Caco-2 (cell line): ENCODE measurements at regions of chr6 and their contacts with region 1.

Region 1: DNA sequence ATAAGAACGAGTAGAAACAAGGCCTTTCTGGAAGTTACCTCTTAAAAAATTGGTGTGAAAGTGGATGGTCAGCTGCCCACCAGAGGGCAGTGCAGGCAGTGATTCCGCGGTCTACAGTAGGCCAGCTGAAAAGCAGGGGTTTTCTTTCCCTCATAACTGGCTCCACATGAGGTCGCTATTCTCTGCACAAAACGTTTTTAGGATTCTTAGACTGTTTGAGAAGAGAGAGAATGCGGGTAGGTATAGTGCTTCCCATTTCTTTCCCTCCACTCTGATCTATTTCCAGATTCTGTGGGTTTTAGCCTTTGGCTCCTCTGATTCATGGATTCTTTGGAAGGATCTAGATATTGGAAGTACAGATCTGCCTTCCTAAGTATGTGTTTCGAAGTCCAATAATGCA is 14.2 kb downstream of the FIG4 start:
- DNase-seq: peak; percentile 75 to 83
- H3K4me3 ChIP-seq: no peak overlapping the region
- H3K4me3 Mint-ChIP-seq: no peak overlapping the region
- H3K27ac Mint-ChIP-seq: no peak overlapping the region
- H3K4me1 ChIP-seq: no peaks in the 10 kb centered on the region
- H3K4me1 Mint-ChIP-seq: no peaks in the 10 kb centered on the region
- H3K27me3 ChIP-seq: no peaks in the 10 kb centered on the region
- H3K27me3 Mint-ChIP-seq: no peaks in the 10 kb centered on the region
- CTCF ChIP-seq: peak; percentile 96 to 97

Region 2: DNA sequence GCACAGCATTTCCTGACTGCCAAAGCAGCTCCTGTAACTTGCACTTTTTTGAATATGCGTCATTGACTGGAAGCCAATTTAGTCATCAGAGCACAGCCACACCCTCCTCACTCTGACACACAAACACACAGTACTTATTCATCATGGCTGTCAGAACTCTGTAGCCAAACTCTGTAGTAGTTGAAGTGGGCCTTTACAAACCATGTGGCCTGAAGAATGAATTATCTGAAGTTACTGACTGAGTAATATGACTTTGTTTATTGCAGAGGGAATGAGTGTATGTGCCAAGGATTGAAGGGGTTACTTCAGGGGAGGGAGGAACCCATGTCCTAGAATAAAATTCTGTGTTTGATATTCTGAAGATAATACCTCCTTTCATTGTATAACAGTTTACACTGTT is 88.5 kb after region 1 on chr6:
- CTCF ChIA-PET with region 1: no interaction called
- POLR2A ChIA-PET with region 1: no interaction called
- intact Hi-C with region 1: loop called (anchors 5 kb)
- DNase-seq: no peak
- H3K4me3 ChIP-seq: no peak overlapping the region
- H3K4me3 Mint-ChIP-seq: no peak overlapping the region
- H3K27ac Mint-ChIP-seq: no peak overlapping the region
- H3K4me1 ChIP-seq: peaks cover 51% of the 10 kb centered on the region
- H3K4me1 Mint-ChIP-seq: no peaks in the 10 kb centered on the region
- H3K27me3 ChIP-seq: no peaks in the 10 kb centered on the region
- H3K27me3 Mint-ChIP-seq: no peaks in the 10 kb centered on the region
- CTCF ChIP-seq: no peak

Region 3: GRCh38 chr6:109865968-109866367 is 160.7 kb after region 1 on chr6:
- CTCF ChIA-PET with region 1: no interaction called
- POLR2A ChIA-PET with region 1: no interaction called
- intact Hi-C with region 1: loop called (anchors 1 kb)
- DNase-seq: peak in 1 of 2 experiments; percentile 21
- H3K4me3 ChIP-seq: no peak overlapping the region
- H3K4me3 Mint-ChIP-seq: no peak overlapping the region
- H3K27ac Mint-ChIP-seq: no peak overlapping the region
- H3K4me1 ChIP-seq: no peaks in the 10 kb centered on the region
- H3K4me1 Mint-ChIP-seq: no peaks in the 10 kb centered on the region
- H3K27me3 ChIP-seq: no peaks in the 10 kb centered on the region
- H3K27me3 Mint-ChIP-seq: no peaks in the 10 kb centered on the region
- CTCF ChIP-seq: no peak

Region 4: DNA sequence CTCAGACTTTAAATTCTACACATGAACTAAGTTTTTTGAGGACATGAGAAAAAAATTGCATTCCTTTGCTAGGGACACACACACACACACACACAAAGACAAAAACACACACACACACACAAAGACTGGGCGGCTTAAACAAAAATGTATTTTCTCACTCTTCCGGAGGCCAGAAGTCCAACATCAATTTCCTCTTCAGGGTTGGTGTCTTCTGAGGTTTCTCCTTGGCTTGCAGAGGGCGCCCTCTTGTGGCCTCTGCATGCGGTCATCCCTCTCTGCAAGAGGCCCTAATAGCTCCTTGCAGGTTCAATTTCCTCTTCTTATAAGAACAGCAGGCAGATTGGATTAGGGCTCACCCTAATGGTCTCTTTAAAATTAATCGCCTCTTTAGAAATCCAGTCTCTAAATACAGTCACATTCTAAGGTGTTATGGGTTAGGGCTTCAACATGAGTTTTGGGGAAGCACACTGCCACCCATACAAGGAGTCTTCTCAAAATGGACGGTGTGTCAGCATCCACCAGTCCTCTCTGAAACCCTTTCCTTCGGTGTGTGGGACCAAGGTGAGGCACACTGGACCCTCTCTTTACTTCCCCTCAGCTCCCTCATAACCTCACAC is 334.2 kb after region 1 on chr6:
- CTCF ChIA-PET with region 1: interaction called, 72 read pairs
- POLR2A ChIA-PET with region 1: no interaction called
- intact Hi-C with region 1: loop called (anchors 1 kb)
- DNase-seq: peak; percentile 82 to 86
- H3K4me3 ChIP-seq: peak overlapping the region; percentile 31
- H3K4me3 Mint-ChIP-seq: peak overlapping the region; percentile 79
- H3K27ac Mint-ChIP-seq: peak overlapping the region; percentile 60
- H3K4me1 ChIP-seq: no peaks in the 10 kb centered on the region
- H3K4me1 Mint-ChIP-seq: peaks cover 12% of the 10 kb centered on the region
- H3K27me3 ChIP-seq: no peaks in the 10 kb centered on the region; the same call in 1 of the 2 replicates
- H3K27me3 Mint-ChIP-seq: peaks cover 8% of the 10 kb centered on the region
- CTCF ChIP-seq: peak; percentile 84 to 91

Region 5: GRCh38 chr6:110389689-110390382 is 684.6 kb after region 1 on chr6:
- CTCF ChIA-PET with region 1: no interaction called
- POLR2A ChIA-PET with region 1: no interaction called
- intact Hi-C with region 1: loop called (anchors 1 kb)
- DNase-seq: peak in 1 of 2 experiments; percentile 32
- H3K4me3 ChIP-seq: no peak overlapping the region
- H3K4me3 Mint-ChIP-seq: no peak overlapping the region
- H3K27ac Mint-ChIP-seq: no peak overlapping the region
- H3K4me1 ChIP-seq: peaks cover 18% of the 10 kb centered on the region
- H3K4me1 Mint-ChIP-seq: peaks cover 15% of the 10 kb centered on the region
- H3K27me3 ChIP-seq: no peaks in the 10 kb centered on the region
- H3K27me3 Mint-ChIP-seq: no peaks in the 10 kb centered on the region
- CTCF ChIP-seq: no peak